ENCODE measurements at regions of chr9 and their contacts with region 1.

Region 1: DNA sequence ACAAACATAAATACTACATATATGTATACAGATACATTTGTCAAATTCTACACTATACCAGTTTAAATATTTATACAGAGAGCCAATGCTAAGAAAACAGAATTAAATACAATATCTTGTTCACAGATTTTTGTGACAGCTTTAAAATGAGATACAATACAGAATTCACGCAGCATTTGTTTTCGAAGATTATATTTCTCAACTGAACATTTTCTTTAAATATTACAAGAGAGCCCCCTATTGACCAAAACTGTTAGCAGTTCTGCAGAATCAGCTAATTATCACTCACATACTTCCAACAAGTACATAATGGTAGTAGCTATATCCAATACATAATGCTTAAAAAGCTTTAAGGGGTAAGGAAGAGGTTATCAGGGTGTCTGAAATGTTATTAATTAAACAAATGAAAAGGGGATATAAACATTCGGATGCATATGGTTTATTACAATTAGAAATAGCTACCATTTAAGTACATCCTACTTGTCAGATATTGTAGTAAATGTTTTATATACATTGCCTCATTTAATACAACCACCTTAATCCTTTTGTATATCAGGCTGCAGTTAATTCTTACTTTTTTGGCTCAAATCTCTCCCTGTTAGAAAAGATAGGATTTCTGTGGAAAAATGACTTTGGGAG is 31.7 kb downstream of the ZDHHC21 start:
- DNase-seq: no peak
- ATAC-seq: peak; percentile 65
- H3K4me3 ChIP-seq: no peak overlapping the region
- H3K27ac ChIP-seq: no peak overlapping the region
- H3K4me1 ChIP-seq: no peaks in the 10 kb centered on the region
- H3K27me3 ChIP-seq: no peaks in the 10 kb centered on the region
- CTCF ChIP-seq: peak; percentile 35 to 48 (median 41); a peak in 4 of 6 replicates
- EP300 ChIP-seq: no peak
- POLR2A ChIP-seq: no peak
- RAD21 ChIP-seq: peak; percentile 37; the same call in 1 of the 2 replicates

Region 2: GRCh38 chr9:14677406-14677805 is 15.9 kb after region 1 on chr9:
- CTCF ChIA-PET with region 1: interaction called, 15 read pairs
- POLR2A ChIA-PET with region 1: no interaction called
- RAD21 ChIA-PET with region 1: interaction called, 5 read pairs
- SMC1A ChIA-PET with region 1: interaction called, 5 read pairs
- in situ Hi-C with region 1: no loop called
- intact Hi-C with region 1: no loop called
- DNase-seq: no peak
- ATAC-seq: no peak
- H3K4me3 ChIP-seq: no peak overlapping the region
- H3K27ac ChIP-seq: no peak overlapping the region
- H3K4me1 ChIP-seq: no peaks in the 10 kb centered on the region
- H3K27me3 ChIP-seq: no peaks in the 10 kb centered on the region
- CTCF ChIP-seq: no peak
- EP300 ChIP-seq: no peak
- POLR2A ChIP-seq: no peak
- RAD21 ChIP-seq: no peak

Region 3: GRCh38 chr9:14687042-14687719 is 25.6 kb after region 1 on chr9:
- CTCF ChIA-PET with region 1: interaction called, 12 read pairs
- POLR2A ChIA-PET with region 1: no interaction called
- RAD21 ChIA-PET with region 1: interaction called, 5 read pairs
- SMC1A ChIA-PET with region 1: interaction called, 7 read pairs
- in situ Hi-C with region 1: no loop called
- intact Hi-C with region 1: no loop called
- DNase-seq: no peak
- ATAC-seq: no peak
- H3K4me3 ChIP-seq: no peak overlapping the region
- H3K27ac ChIP-seq: peak overlapping the region; percentile 82; the same call in 1 of the 2 replicates
- H3K4me1 ChIP-seq: peaks cover 21% of the 10 kb centered on the region
- H3K27me3 ChIP-seq: no peaks in the 10 kb centered on the region
- CTCF ChIP-seq: no peak
- EP300 ChIP-seq: no peak
- POLR2A ChIP-seq: no peak
- RAD21 ChIP-seq: no peak

Region 4: DNA sequence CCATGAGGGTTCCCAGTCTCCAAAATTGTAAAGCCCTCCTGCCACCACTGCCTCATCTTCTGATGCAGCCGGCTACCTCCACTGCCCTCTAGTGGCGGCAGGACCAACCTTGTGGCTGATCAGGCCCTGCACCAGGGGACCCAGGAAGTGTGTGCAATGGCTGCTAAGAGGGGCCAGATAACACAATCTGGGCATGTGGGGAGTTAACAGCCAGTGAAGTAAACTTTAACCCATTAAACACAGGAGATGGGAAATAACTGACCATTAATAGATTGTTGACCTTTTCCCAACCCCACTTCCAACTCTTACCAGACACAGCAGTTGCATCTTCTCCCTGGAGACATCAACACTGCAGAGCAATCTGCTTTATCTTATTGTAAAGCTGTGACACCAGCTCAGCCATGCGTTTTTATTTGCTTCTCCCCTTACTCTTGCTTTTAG is 185.4 kb after region 1 on chr9:
- CTCF ChIA-PET with region 1: no interaction called
- POLR2A ChIA-PET with region 1: no interaction called
- RAD21 ChIA-PET with region 1: no interaction called
- SMC1A ChIA-PET with region 1: no interaction called
- in situ Hi-C with region 1: no loop called
- intact Hi-C with region 1: no loop called
- DNase-seq: no peak
- ATAC-seq: peak; percentile 100
- H3K4me3 ChIP-seq: no peak overlapping the region
- H3K27ac ChIP-seq: no peak overlapping the region
- H3K4me1 ChIP-seq: no peaks in the 10 kb centered on the region
- H3K27me3 ChIP-seq: peaks cover 0 to 2% of the 10 kb centered on the region in 2 experiments; a peak in 1 of 4 replicates
- CTCF ChIP-seq: peak; percentile 69 to 91 (median 87)
- EP300 ChIP-seq: no peak
- POLR2A ChIP-seq: no peak
- RAD21 ChIP-seq: peak; percentile 47